ENCODE measurements at regions of chr1 and their contacts with region 1.

Region 1: GRCh38 chr1:26744075-26744959 is 43.4 kb upstream of the PIGV start:
- DNase-seq: peak; percentile 94
- H3K4me3 Mint-ChIP-seq: peak overlapping the region; percentile 65
- H3K27ac Mint-ChIP-seq: peak overlapping the region; percentile 92
- H3K4me1 Mint-ChIP-seq: peaks cover 84% of the 10 kb centered on the region
- H3K27me3 Mint-ChIP-seq: no peaks in the 10 kb centered on the region

Region 2: DNA sequence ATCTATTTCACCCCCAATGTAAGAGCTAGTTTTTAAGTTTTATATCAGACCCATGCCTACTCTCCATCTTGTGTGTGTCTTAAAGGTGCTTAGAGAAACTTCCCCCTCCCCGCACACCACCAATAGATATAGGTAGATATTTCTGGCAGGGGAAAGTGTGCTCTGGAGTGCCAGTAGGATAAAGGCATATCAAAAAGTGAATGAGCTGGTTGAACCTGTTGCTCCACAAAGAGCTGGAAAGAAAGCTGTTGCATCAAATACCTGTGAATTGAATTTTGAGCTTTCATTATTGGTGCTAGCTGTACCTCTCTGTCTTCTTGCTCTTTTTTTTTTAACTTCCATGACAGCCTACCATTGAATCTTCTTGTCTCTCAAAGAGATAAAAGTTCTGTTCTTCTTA is 15.7 kb before region 1 on chr1:
- CTCF ChIA-PET with region 1: interaction called, 12 read pairs
- POLR2A ChIA-PET with region 1: no interaction called
- DNase-seq: no peak
- H3K4me3 Mint-ChIP-seq: no peak overlapping the region
- H3K27ac Mint-ChIP-seq: no peak overlapping the region
- H3K4me1 Mint-ChIP-seq: peaks cover 77% of the 10 kb centered on the region
- H3K27me3 Mint-ChIP-seq: no peaks in the 10 kb centered on the region

Measured in activated CD4-positive, alpha-beta T cell treated with anti-CD3 and anti-CD28 coated beads, Interleukin-2, amount 10 ng/mL, durations not matched to agents 7 days and 5 days (primary cell).